ENCODE measurements at regions of chr9 and their contacts with region 1.

Region 1: GRCh38 chr9:106771631-106772030 is 91.3 kb upstream of the ZNF462 start:
- DNase-seq: peak; percentile 86 to 97
- ATAC-seq: peak; percentile 78 to 89
- H3K4me3 ChIP-seq: no peak overlapping the region
- H3K27ac ChIP-seq: peak overlapping the region; percentile 76 to 88 (median 86)
- H3K4me1 ChIP-seq: peaks cover 21 to 26% of the 10 kb centered on the region in 2 donors
- H3K27me3 ChIP-seq: no peaks in the 10 kb centered on the region
- CTCF ChIP-seq: no peak
- POLR2A ChIP-seq: peak in 1 of 2 donors; percentile 42

Region 2: GRCh38 chr9:105708405-105708804 is 1063.2 kb before region 1 on chr9:
- in situ Hi-C with region 1: no loop called
- intact Hi-C with region 1: loop called (anchors 5 kb)
- DNase-seq: no peak
- ATAC-seq: no peak
- H3K4me3 ChIP-seq: peak overlapping the region in 3 of 4 donors; percentile 10 to 24 (median 23)
- H3K27ac ChIP-seq: peak overlapping the region; percentile 79 to 84 (median 82)
- H3K4me1 ChIP-seq: peaks cover 48 to 59% of the 10 kb centered on the region in 2 donors
- H3K27me3 ChIP-seq: no peaks in the 10 kb centered on the region
- CTCF ChIP-seq: no peak
- POLR2A ChIP-seq: no peak

Region 3: GRCh38 chr9:105911104-105911911 is 860.3 kb before region 1 on chr9:
- in situ Hi-C with region 1: no loop called
- intact Hi-C with region 1: loop called (anchors 10 kb)
- DNase-seq: no peak
- ATAC-seq: no peak
- H3K4me3 ChIP-seq: peak overlapping the region in 1 of 4 donors; percentile 21
- H3K27ac ChIP-seq: peak overlapping the region; percentile 86 to 99 (median 90)
- H3K4me1 ChIP-seq: peaks cover 24 to 34% of the 10 kb centered on the region in 2 donors
- H3K27me3 ChIP-seq: no peaks in the 10 kb centered on the region
- CTCF ChIP-seq: no peak
- POLR2A ChIP-seq: no peak

Region 4: DNA sequence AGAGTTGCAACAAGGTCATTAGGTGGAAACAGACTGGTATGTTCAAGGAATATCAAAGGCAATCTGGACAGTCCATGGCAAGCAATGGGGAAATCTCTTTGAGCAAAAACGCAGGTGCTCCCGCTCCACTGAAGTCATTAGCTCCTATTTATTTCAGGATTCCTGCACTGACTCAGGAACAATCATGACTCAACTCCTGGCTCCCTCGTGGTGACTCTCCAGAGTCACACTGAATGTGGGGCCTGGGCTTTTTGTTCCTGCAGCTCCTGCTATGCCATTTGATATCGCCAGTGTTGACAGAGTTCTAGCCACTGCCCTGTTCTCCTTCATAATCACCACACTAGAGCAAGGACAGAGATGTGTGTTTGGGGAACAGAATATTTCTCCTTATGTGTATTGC is 95.9 kb before region 1 on chr9:
- in situ Hi-C with region 1: no loop called
- intact Hi-C with region 1: loop called (anchors 5 kb)
- DNase-seq: peak; percentile 85 to 92
- ATAC-seq: peak; percentile 98
- H3K4me3 ChIP-seq: no peak overlapping the region
- H3K27ac ChIP-seq: peak overlapping the region; percentile 80 to 89 (median 84)
- H3K4me1 ChIP-seq: peaks cover 3 to 8% of the 10 kb centered on the region in 2 donors
- H3K27me3 ChIP-seq: no peaks in the 10 kb centered on the region
- CTCF ChIP-seq: no peak
- POLR2A ChIP-seq: no peak